ENCODE measurements at regions of chr10 and their contacts with region 1.

Region 1: DNA sequence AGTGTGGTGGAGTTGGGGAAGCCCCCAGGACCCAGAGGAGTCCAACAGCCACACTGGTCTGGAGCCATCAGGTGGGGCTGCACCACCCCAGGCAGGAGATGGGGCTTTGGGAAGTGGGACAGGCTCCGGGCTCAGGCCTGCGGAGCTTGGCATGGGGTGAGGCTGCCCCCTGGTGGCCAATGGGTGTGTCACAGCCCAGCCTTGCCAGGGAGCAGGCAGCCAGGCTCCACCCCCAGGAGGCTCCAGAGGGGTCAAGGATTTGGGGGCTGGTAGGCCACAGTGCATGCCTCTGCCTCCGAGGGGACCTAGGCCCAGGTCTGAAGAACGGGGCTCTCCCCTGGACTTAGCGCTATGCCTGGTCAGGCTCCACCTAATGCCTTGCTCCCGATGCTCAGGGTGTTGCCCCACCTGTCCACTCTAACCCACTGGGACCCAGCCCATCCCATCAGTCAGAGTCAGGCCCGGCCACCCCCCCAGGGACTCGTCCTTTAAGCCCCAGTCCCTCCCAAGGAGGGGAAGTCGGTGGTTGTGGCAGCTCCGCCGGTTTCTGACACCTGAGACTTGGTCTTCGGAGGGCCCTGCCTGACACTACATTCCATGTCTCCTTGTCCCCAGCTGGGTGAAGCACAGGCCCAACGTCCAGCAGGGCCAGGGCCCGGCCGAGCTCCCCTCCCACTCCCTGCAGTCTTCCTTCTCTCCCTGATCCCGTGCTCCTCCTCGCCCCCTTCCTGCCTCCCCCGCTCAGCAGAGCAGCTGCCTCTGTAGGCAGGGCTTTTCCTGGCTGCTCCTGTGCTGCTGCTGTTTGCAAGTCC is 11.3 kb upstream of the SAMD8 start:
- DNase-seq: peak; percentile 49 to 85
- H3K4me3 ChIP-seq: peak overlapping the region in 1 of 3 donors; percentile 40
- H3K27ac ChIP-seq: peak overlapping the region in 1 of 2 donors; percentile 45
- H3K4me1 ChIP-seq: no peaks in the 10 kb centered on the region
- H3K27me3 ChIP-seq: no peaks in the 10 kb centered on the region
- CTCF ChIP-seq: peak; percentile 97 to 98 (median 97)
- POLR2A ChIP-seq: no peak

Region 2: DNA sequence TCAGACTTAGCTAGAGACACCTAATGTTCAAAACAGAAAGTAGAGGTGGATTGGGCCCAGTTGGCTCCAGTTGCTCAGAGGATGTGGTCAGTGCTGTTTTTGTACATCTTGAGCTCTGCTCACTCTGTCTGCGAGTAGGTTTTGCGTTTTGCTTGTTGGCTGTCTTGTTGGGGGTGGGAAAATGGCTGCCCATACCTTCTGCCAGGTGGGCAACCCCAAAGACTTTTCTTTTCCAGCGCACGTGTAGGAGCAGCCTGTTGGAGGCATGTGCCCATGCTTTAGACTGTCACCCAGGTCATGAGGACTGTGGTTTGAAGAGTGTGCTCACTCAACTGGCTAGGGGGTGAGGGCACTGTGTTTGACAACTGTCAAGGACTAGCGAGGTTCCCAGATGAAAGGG is 199.9 kb before region 1 on chr10:
- intact Hi-C with region 1: loop called (anchors 2 kb)
- DNase-seq: no peak
- H3K4me3 ChIP-seq: no peak overlapping the region
- H3K27ac ChIP-seq: no peak overlapping the region
- H3K4me1 ChIP-seq: peaks cover 0 to 6% of the 10 kb centered on the region in 2 donors
- H3K27me3 ChIP-seq: no peaks in the 10 kb centered on the region
- CTCF ChIP-seq: no peak
- POLR2A ChIP-seq: no peak

Region 3: DNA sequence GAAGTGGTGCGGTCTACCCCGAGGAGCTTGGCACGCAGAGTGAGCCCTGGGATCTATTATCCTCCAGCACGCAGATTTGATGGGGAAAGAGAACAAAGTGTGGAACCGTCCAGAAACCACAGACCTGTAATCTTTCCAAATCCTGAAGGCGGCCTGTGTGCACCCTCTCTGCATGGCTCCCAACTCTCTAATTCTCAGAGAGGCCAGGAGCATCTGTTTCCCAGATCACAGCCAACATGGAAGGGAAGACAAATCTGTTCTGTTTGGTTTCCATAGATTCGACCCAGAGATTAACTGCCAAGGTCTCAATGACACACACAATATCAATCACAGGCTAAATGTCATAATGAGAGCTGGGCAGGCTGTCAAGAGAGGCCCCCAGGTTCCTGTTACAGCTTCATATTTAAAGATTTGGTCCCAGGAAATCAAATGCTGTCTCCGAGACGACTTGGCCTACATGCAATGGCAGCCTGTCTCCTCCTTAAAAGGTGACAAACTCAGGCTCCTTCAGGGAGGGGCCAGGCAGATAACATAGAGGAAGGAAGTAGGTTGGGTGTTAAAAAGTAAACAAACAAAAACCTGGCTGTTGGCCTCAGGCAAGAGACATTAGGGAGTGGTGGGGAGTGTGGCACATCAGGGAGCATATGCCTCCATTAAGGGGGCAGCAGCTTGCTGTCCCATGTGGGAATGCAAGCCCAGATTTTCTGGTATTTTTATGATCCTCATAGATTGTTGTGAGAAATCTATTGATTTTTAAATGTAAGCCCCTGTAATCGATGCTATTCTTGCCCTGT is 37.5 kb before region 1 on chr10:
- intact Hi-C with region 1: loop called (anchors 1 kb)
- DNase-seq: peak in 1 of 2 donors; percentile 44
- H3K4me3 ChIP-seq: no peak overlapping the region
- H3K27ac ChIP-seq: peak overlapping the region; percentile 58 to 76
- H3K4me1 ChIP-seq: no peaks in the 10 kb centered on the region
- H3K27me3 ChIP-seq: no peaks in the 10 kb centered on the region
- CTCF ChIP-seq: no peak
- POLR2A ChIP-seq: no peak

Region 4: GRCh38 chr10:75235375-75236177 is 135.4 kb after region 1 on chr10 and contains the start of gene COMTD1:
- intact Hi-C with region 1: loop called (anchors 10 kb)
- DNase-seq: peak; percentile 94 to 95
- H3K4me3 ChIP-seq: peak within 1 kb of the TSS; percentile 69 to 84 (median 73)
- H3K27ac ChIP-seq: peak within 1 kb of the TSS; percentile 84 to 87
- H3K4me1 ChIP-seq: peaks cover 8 to 9% of the 10 kb centered on the region in 2 donors
- H3K27me3 ChIP-seq: no peaks in the 10 kb centered on the region
- CTCF ChIP-seq: peak; percentile 100
- POLR2A ChIP-seq: no peak
- total RNA-seq, gene COMTD1: 21.0 to 28.5 (median 21.7) TPM